PC-9 (cell line): ENCODE measurements at regions of chr7 and their contacts with region 1.

Region 1: DNA sequence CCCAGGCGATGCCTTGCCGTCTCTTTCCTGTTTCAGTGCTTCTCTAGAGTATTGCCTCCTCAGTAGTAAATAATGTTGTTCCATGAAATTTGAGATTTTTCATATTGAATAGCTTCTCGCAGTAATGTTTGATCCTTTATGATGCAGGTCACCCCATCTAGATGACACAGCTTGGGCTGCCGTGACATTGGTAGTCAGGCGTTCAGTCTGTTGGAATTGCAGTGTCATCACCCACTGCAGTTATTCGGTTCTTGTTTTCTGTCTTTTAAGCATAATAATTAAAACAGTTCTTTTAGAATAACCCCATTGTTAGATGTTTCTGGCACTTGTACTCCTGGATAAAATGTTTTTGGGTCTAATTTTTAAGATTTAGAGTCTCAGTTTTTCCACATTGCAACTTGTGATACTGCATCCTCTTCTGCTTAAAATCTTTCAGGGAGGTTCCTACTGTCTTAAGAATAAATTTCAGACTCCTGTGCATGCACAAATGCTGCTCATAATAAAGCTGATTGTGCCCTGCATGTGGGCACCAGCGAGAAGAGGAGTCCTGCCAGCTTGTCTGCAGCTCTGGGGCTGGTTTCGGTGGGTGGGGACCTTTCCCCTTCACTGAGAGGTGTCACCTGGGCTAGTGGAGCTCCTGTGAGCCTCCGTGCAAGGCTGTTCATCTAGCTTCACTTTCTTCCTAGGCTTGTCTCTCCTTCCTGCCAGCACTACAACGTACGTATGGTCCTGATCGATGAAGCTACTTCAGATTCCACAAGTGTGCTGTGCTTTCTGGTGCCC is 44.8 kb downstream of the SDK1 start:
- DNase-seq: no peak
- H3K4me3 ChIP-seq: no peak overlapping the region
- H3K27ac ChIP-seq: no peak overlapping the region
- H3K4me1 ChIP-seq: no peaks in the 10 kb centered on the region
- H3K27me3 ChIP-seq: peaks cover 30% of the 10 kb centered on the region
- CTCF ChIP-seq: no peak

Region 2: DNA sequence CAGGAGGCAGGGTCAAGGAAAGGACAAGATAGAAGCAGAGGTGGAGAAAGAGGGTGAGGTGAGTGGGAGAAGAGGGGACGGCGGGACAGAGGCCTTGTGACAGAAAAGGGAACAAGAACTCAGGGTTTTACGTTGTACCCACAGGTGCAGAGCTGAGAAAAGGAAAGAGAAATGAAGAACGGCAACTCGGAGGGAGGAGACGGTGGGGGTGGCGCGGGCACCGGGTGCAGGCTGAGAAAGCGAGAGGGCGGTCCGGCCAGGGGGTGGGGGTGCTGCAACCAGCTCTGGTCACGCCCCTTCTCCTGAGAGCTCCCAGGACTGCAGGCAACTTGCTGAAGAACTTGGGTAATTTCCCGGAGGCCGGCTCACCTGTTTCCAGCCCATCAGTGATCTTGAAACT is 367.5 kb before region 1 on chr7:
- CTCF ChIA-PET with region 1: no interaction called
- POLR2A ChIA-PET with region 1: no interaction called
- intact Hi-C with region 1: no loop called
- DNase-seq: no peak
- H3K4me3 ChIP-seq: no peak overlapping the region
- H3K27ac ChIP-seq: no peak overlapping the region
- H3K4me1 ChIP-seq: no peaks in the 10 kb centered on the region
- H3K27me3 ChIP-seq: no peaks in the 10 kb centered on the region
- CTCF ChIP-seq: no peak

Region 3: DNA sequence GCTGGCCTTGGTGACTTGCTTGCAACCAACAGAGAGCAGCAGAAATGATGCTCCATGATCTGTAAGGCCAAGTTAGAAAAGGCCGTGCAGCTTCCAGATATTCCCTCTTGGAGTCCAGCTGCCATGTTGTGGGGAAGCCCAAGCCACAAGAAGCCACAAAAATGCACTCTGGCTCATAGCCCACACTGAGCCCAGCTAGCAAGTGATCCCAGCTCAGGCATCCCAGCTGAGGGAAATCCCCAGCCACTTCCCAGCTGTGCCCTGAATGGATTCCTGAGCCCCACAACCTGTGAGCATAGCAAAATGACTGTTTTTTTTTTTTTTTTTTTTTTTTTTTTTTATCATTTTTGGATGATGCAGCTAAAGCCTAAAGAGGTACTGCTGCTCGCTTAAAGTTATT is 55.9 kb before region 1 on chr7:
- CTCF ChIA-PET with region 1: no interaction called
- POLR2A ChIA-PET with region 1: interaction called, 35 read pairs
- intact Hi-C with region 1: no loop called
- DNase-seq: peak in 1 of 2 experiments; percentile 33
- H3K4me3 ChIP-seq: no peak overlapping the region
- H3K27ac ChIP-seq: no peak overlapping the region
- H3K4me1 ChIP-seq: no peaks in the 10 kb centered on the region
- H3K27me3 ChIP-seq: peaks cover 11% of the 10 kb centered on the region; the same call in 1 of the 2 replicates
- CTCF ChIP-seq: no peak